Astrocyte of the cerebellum (primary cell): ENCODE measurements at regions of chr11 and their contacts with region 1.

Region 1: GRCh38 chr11:40722179-40722795 is 737.2 kb downstream of the LRRC4C start:
- DNase-seq: no peak
- H3K4me3 ChIP-seq: no peak overlapping the region
- CTCF ChIP-seq: peak; percentile 64

Region 2: DNA sequence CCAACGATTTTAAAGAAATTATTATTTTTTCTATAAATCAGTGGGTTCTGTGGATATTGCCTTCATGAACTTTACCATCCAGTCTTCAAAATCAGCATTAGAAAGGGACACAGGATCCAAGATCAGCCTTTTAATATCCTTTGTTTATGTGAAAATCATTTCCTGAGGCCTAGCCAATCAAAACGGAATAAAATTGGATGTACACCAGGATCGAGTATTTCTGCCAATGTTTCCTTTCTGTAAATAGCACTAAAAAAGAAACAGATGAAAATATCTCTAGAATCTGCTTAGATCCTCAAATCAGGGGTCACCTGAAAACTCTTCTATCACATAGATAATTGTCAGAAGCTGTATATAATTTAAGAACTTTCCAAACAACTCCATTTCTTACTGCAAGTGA is 861.4 kb before region 1 on chr11:
- in situ Hi-C with region 1: loop called (anchors 10 kb)
- DNase-seq: no peak
- H3K4me3 ChIP-seq: no peak overlapping the region
- CTCF ChIP-seq: no peak

Region 3: GRCh38 chr11:40819230-40819629 is 96.9 kb after region 1 on chr11:
- in situ Hi-C with region 1: no loop called
- DNase-seq: no peak
- H3K4me3 ChIP-seq: no peak overlapping the region
- CTCF ChIP-seq: no peak

Region 4: GRCh38 chr11:41400819-41401382 is 678.6 kb after region 1 on chr11:
- in situ Hi-C with region 1: no loop called
- DNase-seq: no peak
- H3K4me3 ChIP-seq: no peak overlapping the region
- CTCF ChIP-seq: no peak